ENCODE measurements at regions of chr19 and their contacts with region 1.

Region 1: DNA sequence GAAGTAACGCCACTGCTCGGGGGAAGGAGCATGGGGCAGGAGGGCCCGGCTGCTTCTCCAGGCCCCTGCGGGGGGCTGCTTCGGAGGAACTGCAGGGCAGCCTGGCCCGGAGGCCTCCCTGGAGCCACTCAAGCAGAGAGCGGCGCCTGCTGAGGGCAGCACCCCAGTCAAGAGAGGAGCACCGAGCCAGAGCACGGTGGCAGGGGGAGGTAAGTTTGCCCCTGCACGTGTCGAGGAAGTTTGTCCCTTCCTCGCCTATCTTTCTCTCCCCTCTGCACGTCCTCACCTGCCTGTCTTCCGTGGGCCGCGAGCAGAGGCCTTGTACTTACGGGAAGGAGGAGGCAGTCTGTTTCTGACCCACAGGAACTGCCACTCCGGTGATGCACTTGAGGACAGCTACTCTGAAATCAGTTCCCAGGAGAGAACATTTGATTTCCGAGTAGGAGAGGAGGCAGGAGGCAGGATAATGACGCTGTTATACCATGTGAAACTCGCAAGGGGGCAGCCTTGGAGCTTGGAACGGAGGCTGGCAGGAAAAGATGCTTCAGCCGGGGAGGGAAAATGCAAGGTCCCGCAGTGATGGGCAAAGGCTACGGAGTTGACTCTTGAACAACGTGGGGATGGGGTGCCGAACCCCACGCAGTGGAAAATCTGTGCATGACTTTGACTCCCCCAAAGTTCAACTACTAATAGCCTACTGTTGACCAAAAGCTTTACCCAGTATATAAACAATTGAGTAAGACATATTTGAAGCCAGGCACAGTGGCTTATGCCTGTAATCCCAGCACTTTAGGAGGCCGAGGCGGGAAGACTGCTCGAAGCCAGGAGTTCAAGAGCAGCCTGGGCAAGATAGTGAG is 5.0 kb downstream of the FFAR1 start:
- DNase-seq: peak; percentile 64 to 80 (median 75)
- ATAC-seq: peak; percentile 88 to 94 (median 92)
- H3K4me3 ChIP-seq: no peak overlapping the region
- H3K27ac ChIP-seq: no peak overlapping the region
- H3K4me1 ChIP-seq: no peaks in the 10 kb centered on the region
- H3K27me3 ChIP-seq: no peaks in the 10 kb centered on the region
- CTCF ChIP-seq: peak; percentile 75 to 93 (median 81)
- POLR2A ChIP-seq: no peak

Region 2: GRCh38 chr19:35306473-35307246 is 46.0 kb before region 1 on chr19:
- intact Hi-C with region 1: no loop called
- DNase-seq: no peak
- ATAC-seq: no peak
- H3K4me3 ChIP-seq: no peak overlapping the region
- H3K27ac ChIP-seq: no peak overlapping the region
- H3K4me1 ChIP-seq: peaks cover 0 to 7% (median 0%) of the 10 kb centered on the region in 4 donors
- H3K27me3 ChIP-seq: no peaks in the 10 kb centered on the region
- CTCF ChIP-seq: no peak
- POLR2A ChIP-seq: no peak

Region 3: DNA sequence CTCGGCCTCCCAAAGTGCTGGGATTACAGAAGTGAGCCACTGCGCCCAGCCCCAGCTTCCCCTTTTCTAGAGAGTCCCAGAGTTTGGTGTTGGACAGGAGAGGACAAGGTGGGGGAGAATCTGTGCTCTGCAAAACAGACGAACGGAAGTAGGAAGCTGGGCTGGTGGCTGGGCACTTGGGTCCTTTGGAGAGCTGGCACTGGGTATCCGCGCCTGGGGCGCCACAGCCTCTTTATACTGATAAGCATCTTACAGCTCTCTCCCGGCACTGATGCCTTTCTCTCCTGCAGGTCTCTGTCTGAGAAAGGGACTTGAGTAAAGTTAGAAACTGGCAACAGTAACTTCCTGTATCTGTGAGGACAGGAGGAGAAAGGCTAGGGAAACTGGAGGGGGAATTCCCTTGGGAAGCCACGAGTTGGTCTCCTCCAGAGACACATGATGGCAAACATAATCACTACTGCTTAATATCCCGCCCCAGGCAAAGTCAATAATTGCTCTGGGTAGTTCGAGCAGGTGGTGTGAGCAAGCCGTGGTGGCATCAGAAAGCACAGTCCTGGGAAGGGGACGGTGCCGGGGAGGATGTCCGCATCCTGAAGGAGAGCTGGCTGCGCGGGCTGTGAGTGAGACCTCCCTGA is 96.5 kb after region 1 on chr19:
- intact Hi-C with region 1: no loop called
- DNase-seq: peak in 1 of 3 donors; percentile 56
- ATAC-seq: peak; percentile 35 to 51 (median 48)
- H3K4me3 ChIP-seq: no peak overlapping the region
- H3K27ac ChIP-seq: peak overlapping the region in 1 of 3 donors; percentile 5
- H3K4me1 ChIP-seq: no peaks in the 10 kb centered on the region
- H3K27me3 ChIP-seq: no peaks in the 10 kb centered on the region
- CTCF ChIP-seq: no peak
- POLR2A ChIP-seq: no peak

Region 4: GRCh38 chr19:35468637-35469036 is 116.0 kb after region 1 on chr19:
- intact Hi-C with region 1: loop called (anchors 2 to 10 kb)
- DNase-seq: peak; percentile 68 to 71 (median 71)
- ATAC-seq: peak; percentile 96 to 99 (median 98)
- H3K4me3 ChIP-seq: no peak overlapping the region
- H3K27ac ChIP-seq: no peak overlapping the region
- H3K4me1 ChIP-seq: no peaks in the 10 kb centered on the region
- H3K27me3 ChIP-seq: no peaks in the 10 kb centered on the region
- CTCF ChIP-seq: peak; percentile 74 to 88 (median 80)
- POLR2A ChIP-seq: no peak

Region 5: DNA sequence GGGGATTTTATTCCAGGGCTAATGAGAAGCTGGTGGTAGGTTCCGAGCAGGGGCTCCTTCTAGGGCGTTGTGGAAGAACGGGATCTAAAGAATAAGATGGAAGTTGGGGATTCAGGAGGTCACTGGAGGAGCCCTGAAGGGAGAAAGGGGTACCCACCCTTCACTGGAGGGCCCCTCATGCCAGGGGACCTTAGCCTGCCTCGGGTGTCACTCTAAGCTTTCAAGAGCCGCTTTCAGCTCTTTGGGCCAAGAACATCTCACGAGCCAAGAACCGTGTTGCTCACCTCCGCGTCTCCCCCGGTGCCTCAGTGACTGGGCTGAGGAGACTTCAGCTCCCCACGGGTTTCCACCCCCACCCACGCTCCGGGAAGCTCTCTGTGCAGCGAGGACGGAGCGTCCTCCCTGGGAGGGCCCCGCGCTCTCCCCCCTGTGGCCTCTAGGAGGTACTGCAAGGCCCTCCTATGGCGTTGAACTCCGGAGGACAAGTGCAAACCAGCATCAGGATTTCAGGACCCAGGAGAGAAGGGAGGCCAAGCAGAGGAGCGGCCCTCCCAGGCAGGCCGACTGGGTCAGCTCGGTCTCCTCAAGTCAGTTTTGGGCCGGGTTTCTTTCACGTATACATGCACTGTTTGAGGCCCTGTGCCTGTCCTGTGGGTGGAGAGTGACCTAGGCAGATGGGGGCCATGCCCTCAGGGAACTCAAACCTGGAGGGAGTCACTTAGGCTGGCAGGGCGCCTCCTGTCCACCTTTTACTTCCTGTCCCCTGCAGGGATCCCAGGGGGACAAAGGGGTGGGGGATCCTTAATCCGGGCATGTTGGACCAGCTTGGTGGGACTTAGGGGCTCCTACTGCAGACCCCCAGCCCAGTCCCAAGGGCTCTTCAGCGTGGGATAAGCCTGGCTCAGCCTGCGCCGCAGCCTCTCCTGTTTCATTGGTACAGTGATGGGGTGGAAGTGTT is 142.7 kb after region 1 on chr19:
- intact Hi-C with region 1: loop called in 1 of 2 experiments (anchors 10 kb)
- DNase-seq: peak; percentile 65 to 78 (median 71)
- ATAC-seq: peak; percentile 95 to 99 (median 98)
- H3K4me3 ChIP-seq: no peak overlapping the region
- H3K27ac ChIP-seq: no peak overlapping the region
- H3K4me1 ChIP-seq: no peaks in the 10 kb centered on the region
- H3K27me3 ChIP-seq: no peaks in the 10 kb centered on the region
- CTCF ChIP-seq: peak; percentile 95 to 98 (median 98)
- POLR2A ChIP-seq: no peak

Measured in right lobe of liver (tissue), 6 donors.